ENCODE measurements at regions of chr13 and their contacts with region 1.

Region 1: GRCh38 chr13:50123862-50124536 is 108.8 kb downstream of the KCNRG start:
- DNase-seq: peak; percentile 89
- H3K4me3 Mint-ChIP-seq: peak overlapping the region; percentile 84
- H3K27ac Mint-ChIP-seq: peak overlapping the region; percentile 93
- H3K4me1 Mint-ChIP-seq: peaks cover 41% of the 10 kb centered on the region
- H3K27me3 Mint-ChIP-seq: peaks cover 3% of the 10 kb centered on the region

Region 2: GRCh38 chr13:49386664-49387063 is 737.3 kb before region 1 on chr13:
- intact Hi-C with region 1: no loop called
- DNase-seq: no peak
- H3K4me3 Mint-ChIP-seq: no peak overlapping the region
- H3K27ac Mint-ChIP-seq: no peak overlapping the region
- H3K4me1 Mint-ChIP-seq: no peaks in the 10 kb centered on the region
- H3K27me3 Mint-ChIP-seq: peaks cover 11% of the 10 kb centered on the region

Region 3: GRCh38 chr13:49792550-49793324 is 331.3 kb before region 1 on chr13 and contains the start of gene KPNA3:
- intact Hi-C with region 1: loop called (anchors 10 kb)
- DNase-seq: peak; percentile 98
- H3K4me3 Mint-ChIP-seq: peak within 1 kb of the TSS; percentile 93
- H3K27ac Mint-ChIP-seq: peak within 1 kb of the TSS; percentile 99
- H3K4me1 Mint-ChIP-seq: peaks cover 30% of the 10 kb centered on the region
- H3K27me3 Mint-ChIP-seq: no peaks in the 10 kb centered on the region
- total RNA-seq, gene KPNA3: 56.5 and 58.8 TPM in 2 replicates

Region 4: DNA sequence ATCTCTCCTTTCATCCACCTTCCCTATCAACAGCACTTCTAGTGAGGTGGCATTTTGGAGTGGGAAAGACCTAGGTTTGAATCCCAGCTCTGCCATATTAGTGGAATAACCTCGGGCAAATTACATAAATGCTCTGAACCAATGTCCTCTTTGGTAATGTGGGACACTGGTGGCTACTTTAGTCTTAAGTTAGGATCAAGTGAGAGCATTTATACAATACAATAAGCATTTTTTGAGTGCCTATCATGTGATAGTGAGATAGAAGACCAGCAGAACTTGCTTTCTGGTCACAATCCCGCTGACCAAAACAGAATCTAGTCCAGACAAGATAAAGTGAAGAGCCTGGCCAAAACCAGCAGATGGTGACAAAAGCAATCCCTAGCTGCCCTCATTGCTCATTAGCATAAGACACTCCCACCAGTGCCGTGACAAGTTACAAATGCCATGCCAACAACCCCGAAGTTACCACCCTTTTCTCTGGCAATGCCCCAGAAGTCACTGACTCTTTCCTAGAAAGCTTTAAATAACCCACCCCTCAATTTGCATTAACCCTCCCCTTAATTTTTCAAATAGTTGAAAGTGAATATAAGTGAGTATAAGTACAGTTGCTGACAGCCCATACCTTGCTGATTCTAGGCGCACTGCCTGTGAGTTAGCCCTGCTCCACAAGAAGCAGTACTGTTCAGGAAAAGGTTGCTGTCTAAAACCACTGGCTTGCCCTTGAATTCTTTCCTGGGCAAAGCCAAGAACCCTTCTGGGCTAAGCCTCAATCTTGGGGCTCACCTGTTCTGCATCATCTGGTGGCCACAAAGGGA is 302.6 kb before region 1 on chr13:
- intact Hi-C with region 1: no loop called
- DNase-seq: no peak
- H3K4me3 Mint-ChIP-seq: no peak overlapping the region
- H3K27ac Mint-ChIP-seq: no peak overlapping the region
- H3K4me1 Mint-ChIP-seq: no peaks in the 10 kb centered on the region
- H3K27me3 Mint-ChIP-seq: peaks cover 15% of the 10 kb centered on the region

Region 5: DNA sequence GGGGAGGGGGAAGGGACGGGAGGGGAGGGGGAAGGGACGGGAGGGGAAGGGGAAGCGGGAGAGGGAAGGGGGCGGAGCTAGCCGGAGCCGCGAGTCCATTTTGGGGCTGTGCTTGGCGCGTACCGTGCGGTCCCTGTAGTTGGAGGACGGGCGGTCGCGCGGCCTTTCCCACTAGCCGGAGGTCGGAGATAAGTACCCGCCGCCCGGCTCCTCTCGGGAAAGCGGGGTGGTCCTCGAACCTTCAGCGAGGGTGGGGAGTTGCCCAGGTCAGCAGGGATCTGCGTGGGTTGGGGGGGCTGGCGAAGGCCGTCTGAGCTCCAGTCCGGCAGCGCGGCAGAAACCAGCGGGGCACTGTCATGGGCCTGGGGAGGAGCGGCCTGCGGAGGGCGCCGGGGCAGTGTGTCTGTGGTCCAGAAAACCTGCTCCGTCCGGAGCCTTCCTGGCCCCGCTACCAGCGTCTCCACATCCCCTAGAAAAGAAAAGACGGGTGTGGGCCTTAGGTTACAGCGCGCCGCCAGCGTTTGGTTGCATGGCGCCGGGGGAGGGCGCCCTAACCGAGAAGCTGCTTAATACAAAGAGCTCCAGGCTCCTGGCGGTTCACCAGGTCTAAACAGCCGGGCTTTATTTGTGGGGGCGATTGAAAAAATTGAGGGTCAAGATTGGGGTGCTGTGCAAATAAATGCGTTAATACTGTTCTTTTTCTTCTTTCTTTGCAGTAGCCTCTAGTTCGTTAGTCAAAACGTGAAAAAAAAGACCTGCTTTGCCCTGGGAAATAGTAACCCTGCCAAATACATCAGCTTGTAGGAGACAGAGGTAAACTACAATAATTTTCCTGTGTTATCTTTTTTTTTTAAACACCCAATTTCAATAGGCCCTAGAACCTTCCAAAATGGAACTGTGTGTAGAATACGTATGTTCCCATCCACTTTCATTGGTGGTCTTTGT is 126.8 kb before region 1 on chr13 and contains the start of gene TRIM13:
- intact Hi-C with region 1: loop called (anchors 1 kb)
- DNase-seq: peak; percentile 95
- H3K4me3 Mint-ChIP-seq: peak within 1 kb of the TSS; percentile 88
- H3K27ac Mint-ChIP-seq: peak within 1 kb of the TSS; percentile 95
- H3K4me1 Mint-ChIP-seq: peaks cover 36% of the 10 kb centered on the region
- H3K27me3 Mint-ChIP-seq: no peaks in the 10 kb centered on the region
- total RNA-seq, gene TRIM13: 18.0 and 18.9 TPM in 2 replicates

Region 6: GRCh38 chr13:50053844-50054243 is 70.2 kb before region 1 on chr13:
- intact Hi-C with region 1: no loop called
- DNase-seq: no peak
- H3K4me3 Mint-ChIP-seq: no peak overlapping the region
- H3K27ac Mint-ChIP-seq: no peak overlapping the region
- H3K4me1 Mint-ChIP-seq: peaks cover 31% of the 10 kb centered on the region
- H3K27me3 Mint-ChIP-seq: no peaks in the 10 kb centered on the region

Region 7: DNA sequence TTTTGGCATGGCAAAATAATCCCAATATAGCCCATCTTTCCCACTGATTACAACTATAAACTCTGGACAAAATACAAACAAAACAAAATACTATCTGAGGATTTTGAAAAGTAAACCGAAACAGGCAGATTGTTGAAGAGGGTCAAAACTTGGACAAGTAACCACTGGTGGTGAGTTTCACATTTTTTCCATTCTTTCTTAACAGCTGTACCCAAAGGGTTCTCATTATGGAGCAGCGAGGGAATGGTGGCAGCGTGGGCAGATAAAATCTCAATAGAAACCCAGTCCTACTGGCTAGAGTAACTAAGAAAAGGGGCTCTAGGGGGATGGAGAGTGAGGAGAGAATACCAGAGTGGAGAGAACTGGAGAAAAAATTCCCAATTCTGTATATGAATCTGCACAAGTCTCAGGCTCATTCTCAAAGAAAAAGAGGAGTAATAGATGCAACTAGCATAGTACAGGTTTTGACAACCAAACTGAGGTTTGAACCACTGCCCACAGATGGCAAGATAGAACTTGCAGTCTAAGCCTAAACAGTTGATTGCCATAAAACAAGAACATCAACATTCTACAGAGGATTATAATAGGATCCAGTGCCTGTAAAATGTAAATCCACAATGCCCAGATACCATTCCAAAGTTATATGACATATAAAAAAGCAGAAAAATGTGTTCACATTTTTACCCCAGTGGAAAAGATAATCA is 175.7 kb after region 1 on chr13:
- intact Hi-C with region 1: no loop called
- DNase-seq: no peak
- H3K4me3 Mint-ChIP-seq: no peak overlapping the region
- H3K27ac Mint-ChIP-seq: no peak overlapping the region
- H3K4me1 Mint-ChIP-seq: no peaks in the 10 kb centered on the region
- H3K27me3 Mint-ChIP-seq: peaks cover 42% of the 10 kb centered on the region

Region 8: DNA sequence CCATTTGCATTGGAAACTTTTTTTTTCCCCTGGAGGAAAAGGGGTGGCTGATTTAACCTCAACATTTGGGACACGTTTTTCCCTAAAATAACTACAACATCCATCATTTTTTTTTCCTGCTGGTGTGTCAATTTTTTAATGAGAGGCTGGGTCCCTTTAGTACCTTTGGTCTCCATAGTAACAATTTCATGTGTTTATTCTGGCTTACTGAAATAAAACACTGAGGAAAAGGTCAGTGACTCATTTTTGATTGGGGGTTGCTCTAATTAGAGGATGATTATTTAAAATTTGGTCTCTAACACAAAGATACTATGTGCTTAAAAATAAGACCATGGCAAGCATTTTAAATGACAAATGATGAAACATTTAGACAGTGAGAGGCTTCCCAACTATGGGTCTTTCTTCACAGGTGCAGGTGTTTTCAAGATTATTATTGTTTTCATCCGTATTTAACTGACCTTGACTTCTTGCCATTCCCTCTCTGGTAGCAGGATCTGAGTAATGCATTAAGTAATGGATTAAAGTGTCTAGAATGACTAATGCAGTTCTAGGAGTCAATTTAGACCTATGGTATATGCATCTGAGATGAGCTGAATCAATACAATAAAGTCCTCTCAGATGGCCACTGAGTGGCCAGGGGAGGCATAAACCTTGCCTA is 297.6 kb after region 1 on chr13:
- intact Hi-C with region 1: loop called (anchors 5 kb)
- DNase-seq: no peak
- H3K4me3 Mint-ChIP-seq: no peak overlapping the region
- H3K27ac Mint-ChIP-seq: no peak overlapping the region
- H3K4me1 Mint-ChIP-seq: peaks cover 7% of the 10 kb centered on the region
- H3K27me3 Mint-ChIP-seq: no peaks in the 10 kb centered on the region

Region 9: GRCh38 chr13:50893211-50893852 is 769.3 kb after region 1 on chr13:
- intact Hi-C with region 1: loop called (anchors 5 kb)
- DNase-seq: peak; percentile 84
- H3K4me3 Mint-ChIP-seq: peak overlapping the region; percentile 63
- H3K27ac Mint-ChIP-seq: peak overlapping the region; percentile 86
- H3K4me1 Mint-ChIP-seq: peaks cover 54% of the 10 kb centered on the region
- H3K27me3 Mint-ChIP-seq: no peaks in the 10 kb centered on the region